Activated CD4-positive, alpha-beta memory T cell treated with anti-CD3 and anti-CD28 coated beads for 36 hours (primary cell): ENCODE measurements at regions of chr22 and their contacts with region 1.

Region 1: DNA sequence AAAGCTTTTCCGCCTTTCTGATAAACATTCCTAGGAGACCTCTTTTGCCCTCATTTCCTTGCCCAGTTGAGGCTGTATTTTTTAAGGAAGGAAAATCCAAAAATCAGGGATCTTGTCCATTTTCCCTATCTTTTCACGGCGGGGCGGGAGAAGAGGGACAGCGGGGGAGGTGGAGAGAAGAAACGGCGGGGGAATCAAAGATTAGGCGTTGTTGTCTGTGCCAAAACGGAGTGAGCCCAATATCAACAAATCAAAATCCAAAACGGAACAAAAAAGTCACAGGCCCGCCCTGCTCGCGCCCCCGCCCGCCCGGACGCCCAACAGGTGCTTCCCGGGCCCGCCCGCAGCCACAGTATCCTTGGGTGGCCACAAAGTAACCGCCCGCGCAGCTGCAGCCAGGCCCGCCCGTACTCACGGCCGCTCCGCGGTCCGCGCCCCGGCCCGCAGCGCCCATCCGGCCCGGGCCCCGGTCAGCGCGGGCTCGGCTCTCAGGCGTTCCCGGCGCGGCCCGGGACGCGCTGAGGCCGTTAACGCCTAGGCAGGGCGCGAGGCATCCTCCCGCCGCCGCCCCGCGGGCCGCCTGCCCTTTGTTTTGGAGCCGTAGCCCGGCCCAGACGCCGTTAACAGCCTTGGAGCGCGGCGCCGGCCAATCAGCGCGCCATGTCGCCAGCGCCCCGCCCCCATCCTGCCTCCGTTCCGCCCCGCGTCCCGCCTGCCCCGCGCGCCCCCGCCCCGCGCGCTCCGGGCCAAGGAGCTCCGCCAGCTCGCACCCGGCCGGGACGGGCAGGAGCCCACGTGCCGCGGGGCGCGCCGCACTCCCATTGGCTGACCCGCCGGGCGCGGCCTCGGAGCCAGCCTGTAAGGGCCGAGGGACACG is at the start of gene YPEL1:
- DNase-seq: peak; percentile 95
- H3K4me3 Mint-ChIP-seq: peak within 1 kb of the TSS; percentile 80
- H3K27ac Mint-ChIP-seq: peak within 1 kb of the TSS; percentile 49
- H3K4me1 Mint-ChIP-seq: peaks cover 13% of the 10 kb centered on the region
- H3K27me3 Mint-ChIP-seq: peaks cover 1% of the 10 kb centered on the region
- total RNA-seq, gene YPEL1: 1.6 to 1.8 TPM

Region 2: DNA sequence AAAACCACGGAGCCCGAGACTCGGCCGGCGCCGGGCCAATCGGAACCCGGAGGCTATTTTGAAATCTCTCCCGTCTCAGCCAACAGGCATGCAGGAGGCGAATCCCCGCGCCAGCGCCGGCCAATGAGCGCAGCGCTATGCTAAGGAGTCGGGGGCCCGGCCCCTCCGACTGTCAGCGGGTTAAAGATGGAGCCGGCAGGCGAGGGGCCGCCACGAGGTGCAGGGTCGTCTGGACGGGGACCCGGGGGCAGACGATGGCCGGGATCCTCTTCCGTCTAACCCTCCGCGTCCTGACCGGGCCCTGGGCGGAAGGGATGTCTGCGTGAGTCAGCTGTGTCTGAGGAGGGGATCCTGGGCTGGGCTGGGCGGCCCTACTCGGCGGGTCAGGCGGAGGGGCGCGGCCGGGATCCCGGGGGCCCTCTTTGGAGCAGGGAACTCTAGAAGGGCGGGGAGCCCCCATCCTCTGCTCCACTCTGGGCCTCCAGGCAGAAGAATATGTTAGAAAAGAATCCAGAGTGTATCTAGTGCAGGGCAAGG is 83.4 kb before region 1 on chr22:
- CTCF ChIA-PET with region 1: no interaction called
- POLR2A ChIA-PET with region 1: no interaction called
- intact Hi-C with region 1: loop called (anchors 5 kb)
- DNase-seq: peak; percentile 93
- H3K4me3 Mint-ChIP-seq: peak overlapping the region; percentile 85
- H3K27ac Mint-ChIP-seq: peak overlapping the region; percentile 38
- H3K4me1 Mint-ChIP-seq: peaks cover 20% of the 10 kb centered on the region
- H3K27me3 Mint-ChIP-seq: no peaks in the 10 kb centered on the region

Region 3: GRCh38 chr22:21665047-21665851 is 70.2 kb before region 1 on chr22:
- CTCF ChIA-PET with region 1: no interaction called
- POLR2A ChIA-PET with region 1: interaction called, 3 read pairs
- intact Hi-C with region 1: loop called (anchors 2 kb)
- DNase-seq: no peak
- H3K4me3 Mint-ChIP-seq: peak overlapping the region; percentile 99
- H3K27ac Mint-ChIP-seq: peak overlapping the region; percentile 91
- H3K4me1 Mint-ChIP-seq: peaks cover 21% of the 10 kb centered on the region
- H3K27me3 Mint-ChIP-seq: no peaks in the 10 kb centered on the region

Region 4: GRCh38 chr22:21707677-21708076 is 27.8 kb before region 1 on chr22:
- CTCF ChIA-PET with region 1: no interaction called
- POLR2A ChIA-PET with region 1: no interaction called
- intact Hi-C with region 1: no loop called
- DNase-seq: no peak
- H3K4me3 Mint-ChIP-seq: no peak overlapping the region
- H3K27ac Mint-ChIP-seq: no peak overlapping the region
- H3K4me1 Mint-ChIP-seq: no peaks in the 10 kb centered on the region
- H3K27me3 Mint-ChIP-seq: no peaks in the 10 kb centered on the region

Region 5: GRCh38 chr22:21766691-21767462 is 31.4 kb after region 1 on chr22:
- CTCF ChIA-PET with region 1: interaction called, 3 read pairs
- POLR2A ChIA-PET with region 1: interaction called, 5 read pairs
- intact Hi-C with region 1: loop called (anchors 2 kb)
- DNase-seq: peak; percentile 85
- H3K4me3 Mint-ChIP-seq: peak overlapping the region; percentile 5
- H3K27ac Mint-ChIP-seq: peak overlapping the region; percentile 66
- H3K4me1 Mint-ChIP-seq: peaks cover 68% of the 10 kb centered on the region
- H3K27me3 Mint-ChIP-seq: peaks cover 5% of the 10 kb centered on the region

Region 6: GRCh38 chr22:22037740-22038139 is 302.3 kb after region 1 on chr22:
- CTCF ChIA-PET with region 1: no interaction called
- POLR2A ChIA-PET with region 1: no interaction called
- intact Hi-C with region 1: no loop called
- DNase-seq: no peak
- H3K4me3 Mint-ChIP-seq: no peak overlapping the region
- H3K27ac Mint-ChIP-seq: no peak overlapping the region
- H3K4me1 Mint-ChIP-seq: no peaks in the 10 kb centered on the region
- H3K27me3 Mint-ChIP-seq: peaks cover 3% of the 10 kb centered on the region